Activated B cell treated with CpG ODN at 0.5 μM for 24 hours (primary cell): ENCODE measurements at regions of chr1 and their contacts with region 1.

Region 1: GRCh38 chr1:151459331-151460046 is at the start of gene POGZ:
- DNase-seq: peak; percentile 84
- ATAC-seq: peak; percentile 68
- H3K4me3 Mint-ChIP-seq: peak within 1 kb of the TSS; percentile 89
- H3K27ac Mint-ChIP-seq: peak within 1 kb of the TSS; percentile 91
- H3K4me1 Mint-ChIP-seq: peaks cover 40% of the 10 kb centered on the region
- H3K27me3 Mint-ChIP-seq: peaks cover 15% of the 10 kb centered on the region
- CTCF ChIP-seq: no peak
- total RNA-seq, gene POGZ: 121 and 135 TPM in 2 replicates

Region 2: GRCh38 chr1:151346769-151347522 is 112.5 kb before region 1 on chr1 and contains the start of gene RFX5:
- CTCF ChIA-PET with region 1: no interaction called
- POLR2A ChIA-PET with region 1: no interaction called
- intact Hi-C with region 1: loop called (anchors 5 kb)
- DNase-seq: peak; percentile 77
- ATAC-seq: peak; percentile 91
- H3K4me3 Mint-ChIP-seq: peak within 1 kb of the TSS; percentile 98
- H3K27ac Mint-ChIP-seq: peak within 1 kb of the TSS; percentile 100
- H3K4me1 Mint-ChIP-seq: peaks cover 55% of the 10 kb centered on the region
- H3K27me3 Mint-ChIP-seq: no peaks in the 10 kb centered on the region
- CTCF ChIP-seq: no peak
- total RNA-seq, gene RFX5: 222 and 262 TPM in 2 replicates

Region 3: DNA sequence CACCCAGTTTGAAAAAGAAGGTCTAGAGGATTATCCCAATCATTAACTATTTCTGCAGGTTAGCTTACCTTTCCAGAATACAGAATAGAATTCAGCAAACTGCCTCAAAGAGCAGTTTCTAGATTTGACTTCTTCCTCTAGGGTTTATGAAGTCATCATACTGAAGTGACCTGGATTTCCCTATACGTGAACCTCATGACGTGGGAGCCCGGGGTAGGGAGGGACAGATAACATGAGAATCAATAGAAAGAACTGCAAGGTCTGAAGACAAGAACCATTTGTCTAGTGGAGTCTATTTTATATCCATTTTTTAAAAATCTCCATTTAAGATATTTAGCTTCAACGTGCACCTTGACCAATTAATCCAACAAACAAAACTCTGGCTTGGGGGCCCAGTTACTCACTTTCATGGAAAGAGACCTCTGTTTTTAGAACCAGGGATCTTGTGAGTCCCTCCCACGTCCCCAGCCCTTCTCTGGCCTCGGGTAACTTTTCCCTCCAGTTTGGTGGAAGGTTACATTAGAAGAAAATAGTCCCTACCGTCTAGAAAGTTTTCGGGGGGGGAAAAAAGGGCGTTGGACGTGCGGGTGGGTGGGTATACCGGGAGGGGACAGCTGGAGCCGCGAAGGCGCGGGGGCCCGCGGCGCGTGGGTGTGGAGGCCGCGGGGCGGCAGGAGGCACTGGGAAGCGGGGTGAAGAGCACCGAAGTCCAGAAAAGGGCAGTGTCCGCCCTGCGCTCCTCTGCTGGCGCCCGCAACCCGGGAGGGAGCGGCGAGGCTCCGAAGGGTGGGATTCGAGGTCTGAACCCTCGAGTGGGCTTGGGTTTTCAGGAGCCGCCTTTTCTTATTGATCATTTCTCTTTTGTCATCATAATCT is 13.6 kb after region 1 on chr1:
- CTCF ChIA-PET with region 1: interaction called, 8 read pairs
- POLR2A ChIA-PET with region 1: interaction called, 122 read pairs
- intact Hi-C with region 1: loop called (anchors 1 kb)
- DNase-seq: peak; percentile 54
- ATAC-seq: peak; percentile 65
- H3K4me3 Mint-ChIP-seq: peak overlapping the region; percentile 86
- H3K27ac Mint-ChIP-seq: peak overlapping the region; percentile 72
- H3K4me1 Mint-ChIP-seq: peaks cover 5% of the 10 kb centered on the region
- H3K27me3 Mint-ChIP-seq: peaks cover 3% of the 10 kb centered on the region
- CTCF ChIP-seq: no peak

Region 4: DNA sequence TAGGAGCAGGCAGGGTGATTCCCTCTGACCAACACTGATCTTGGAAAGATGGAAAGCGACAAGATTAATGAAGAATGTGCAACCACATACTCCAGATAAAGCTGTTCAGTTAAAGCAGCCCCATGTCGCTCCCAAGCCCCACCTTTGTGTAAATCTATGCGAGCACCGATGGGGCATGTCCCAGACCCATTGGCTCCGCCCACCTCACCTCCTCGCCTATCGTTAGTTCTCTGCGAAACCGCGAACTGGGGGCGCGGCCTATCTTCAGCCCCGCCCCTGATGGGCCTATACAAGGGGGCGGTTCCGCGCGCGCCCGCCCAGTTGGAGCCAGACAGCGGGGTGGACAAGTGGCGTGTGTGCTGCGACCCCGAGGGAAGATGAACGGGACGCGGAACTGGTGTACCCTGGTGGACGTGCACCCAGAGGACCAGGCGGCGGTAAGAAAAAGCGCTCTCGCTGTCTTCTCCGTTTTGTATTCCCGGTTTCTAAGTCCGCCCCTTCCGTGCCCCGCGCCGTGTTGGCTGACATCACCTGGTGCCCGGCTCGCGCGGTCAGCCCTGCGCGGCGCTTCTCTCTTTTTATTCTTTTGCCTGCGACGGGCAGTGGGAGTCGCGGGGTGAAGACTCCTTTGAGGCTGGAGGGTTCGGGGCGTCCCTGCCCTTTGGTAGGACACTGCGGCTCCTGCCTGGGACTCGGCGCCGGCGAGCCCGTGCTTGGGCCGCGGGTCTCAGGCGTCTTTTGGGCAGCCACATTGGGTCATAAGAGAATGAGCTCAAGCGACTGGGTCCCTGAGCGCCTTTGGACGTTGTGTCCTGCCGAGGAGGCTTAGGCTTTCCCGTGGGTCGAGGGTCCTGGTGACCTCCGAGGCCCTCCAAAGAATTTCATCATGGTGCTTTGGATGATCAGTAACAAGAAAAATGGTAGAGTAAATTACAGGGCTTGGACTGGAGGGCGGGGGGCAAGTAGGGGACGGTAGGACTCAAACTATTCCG is 80.8 kb after region 1 on chr1 and contains the start of gene TUFT1:
- CTCF ChIA-PET with region 1: interaction called, 3 read pairs
- POLR2A ChIA-PET with region 1: no interaction called
- intact Hi-C with region 1: loop called (anchors 5 kb)
- DNase-seq: peak; percentile 94
- ATAC-seq: peak; percentile 99
- H3K4me3 Mint-ChIP-seq: peak within 1 kb of the TSS; percentile 93
- H3K27ac Mint-ChIP-seq: peak within 1 kb of the TSS; percentile 78
- H3K4me1 Mint-ChIP-seq: peaks cover 24% of the 10 kb centered on the region
- H3K27me3 Mint-ChIP-seq: peaks cover 5% of the 10 kb centered on the region
- CTCF ChIP-seq: no peak
- total RNA-seq, gene TUFT1: 2.3 and 2.4 TPM in 2 replicates

Region 5: GRCh38 chr1:151790071-151790940 is 330.8 kb after region 1 on chr1 and contains the start of gene TDRKH:
- CTCF ChIA-PET with region 1: no interaction called
- POLR2A ChIA-PET with region 1: no interaction called
- intact Hi-C with region 1: loop called (anchors 5 kb)
- DNase-seq: peak; percentile 91
- ATAC-seq: peak; percentile 93
- H3K4me3 Mint-ChIP-seq: peak within 1 kb of the TSS; percentile 99
- H3K27ac Mint-ChIP-seq: peak within 1 kb of the TSS; percentile 91
- H3K4me1 Mint-ChIP-seq: peaks cover 21% of the 10 kb centered on the region
- H3K27me3 Mint-ChIP-seq: peaks cover 3% of the 10 kb centered on the region
- CTCF ChIP-seq: no peak
- total RNA-seq, gene TDRKH: 15.1 and 15.6 TPM in 2 replicates